Activated CD4-positive, alpha-beta memory T cell treated with anti-CD3 and anti-CD28 coated beads for 36 hours (primary cell): ENCODE measurements at regions of chr11 and their contacts with region 1.

Region 1: GRCh38 chr11:72030472-72031045 is 31.9 kb downstream of the IL18BP start:
- DNase-seq: no peak
- H3K4me3 Mint-ChIP-seq: no peak overlapping the region
- H3K27ac Mint-ChIP-seq: peak overlapping the region; percentile 38
- H3K4me1 Mint-ChIP-seq: peaks cover 27% of the 10 kb centered on the region
- H3K27me3 Mint-ChIP-seq: no peaks in the 10 kb centered on the region

Region 2: DNA sequence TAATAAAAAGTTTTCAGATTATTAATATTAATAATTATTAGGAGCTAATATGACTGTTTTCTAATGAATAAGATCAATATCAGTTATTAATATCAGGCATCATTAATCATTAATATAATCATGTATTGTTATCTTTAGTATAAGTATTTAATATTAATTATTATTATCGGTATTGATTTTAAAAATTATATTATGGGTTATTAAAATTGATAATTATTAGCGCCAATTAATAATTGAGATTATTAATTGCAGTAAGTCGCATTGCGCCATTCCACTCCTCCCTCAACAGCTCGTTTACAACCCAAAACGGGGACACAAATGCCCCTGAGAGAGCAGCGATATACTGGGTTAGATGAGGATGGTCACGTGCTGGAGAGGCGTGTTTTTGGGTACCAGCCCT is 122.3 kb before region 1 on chr11:
- CTCF ChIA-PET with region 1: no interaction called
- POLR2A ChIA-PET with region 1: no interaction called
- intact Hi-C with region 1: no loop called
- DNase-seq: no peak
- H3K4me3 Mint-ChIP-seq: no peak overlapping the region
- H3K27ac Mint-ChIP-seq: no peak overlapping the region
- H3K4me1 Mint-ChIP-seq: peaks cover 12% of the 10 kb centered on the region
- H3K27me3 Mint-ChIP-seq: no peaks in the 10 kb centered on the region

Region 3: GRCh38 chr11:72015511-72016171 is 14.9 kb before region 1 on chr11:
- CTCF ChIA-PET with region 1: interaction called, 55 read pairs
- POLR2A ChIA-PET with region 1: no interaction called
- intact Hi-C with region 1: no loop called
- DNase-seq: peak; percentile 19
- H3K4me3 Mint-ChIP-seq: no peak overlapping the region
- H3K27ac Mint-ChIP-seq: peak overlapping the region; percentile 18
- H3K4me1 Mint-ChIP-seq: no peaks in the 10 kb centered on the region
- H3K27me3 Mint-ChIP-seq: no peaks in the 10 kb centered on the region

Region 4: DNA sequence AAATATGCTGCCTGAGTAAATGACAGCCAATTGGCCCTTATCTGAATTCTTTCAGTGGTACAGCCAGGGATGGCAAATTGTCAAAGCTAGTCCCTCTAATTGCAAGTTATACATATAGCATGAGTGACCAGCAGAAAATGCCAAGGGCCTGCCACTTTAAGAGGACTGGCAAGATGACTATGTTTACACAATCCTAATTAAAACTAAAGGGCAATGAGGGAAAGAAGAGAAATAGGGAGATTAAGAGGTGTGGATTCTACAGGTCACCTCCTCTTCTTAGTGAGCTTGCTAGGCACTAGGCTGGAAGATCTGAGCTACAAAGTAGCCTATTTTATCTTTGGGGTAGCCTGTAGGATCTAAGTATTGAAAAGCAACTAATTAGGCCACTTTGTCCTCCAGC is 36.3 kb after region 1 on chr11:
- CTCF ChIA-PET with region 1: interaction called, 13 read pairs
- POLR2A ChIA-PET with region 1: no interaction called
- intact Hi-C with region 1: no loop called
- DNase-seq: no peak
- H3K4me3 Mint-ChIP-seq: no peak overlapping the region
- H3K27ac Mint-ChIP-seq: no peak overlapping the region
- H3K4me1 Mint-ChIP-seq: peaks cover 33% of the 10 kb centered on the region
- H3K27me3 Mint-ChIP-seq: no peaks in the 10 kb centered on the region

Region 5: GRCh38 chr11:72085621-72086351 is 55.2 kb after region 1 on chr11:
- CTCF ChIA-PET with region 1: interaction called, 179 read pairs
- POLR2A ChIA-PET with region 1: no interaction called
- intact Hi-C with region 1: no loop called
- DNase-seq: no peak
- H3K4me3 Mint-ChIP-seq: no peak overlapping the region
- H3K27ac Mint-ChIP-seq: peak overlapping the region; percentile 1
- H3K4me1 Mint-ChIP-seq: peaks cover 23% of the 10 kb centered on the region
- H3K27me3 Mint-ChIP-seq: no peaks in the 10 kb centered on the region

Region 6: GRCh38 chr11:72179804-72180396 is 149.3 kb after region 1 on chr11:
- CTCF ChIA-PET with region 1: interaction called, 20 read pairs
- POLR2A ChIA-PET with region 1: no interaction called
- intact Hi-C with region 1: no loop called
- DNase-seq: peak; percentile 22
- H3K4me3 Mint-ChIP-seq: no peak overlapping the region
- H3K27ac Mint-ChIP-seq: no peak overlapping the region
- H3K4me1 Mint-ChIP-seq: peaks cover 14% of the 10 kb centered on the region
- H3K27me3 Mint-ChIP-seq: peaks cover 6% of the 10 kb centered on the region